ENCODE measurements at regions of chr17 and their contacts with region 1.

Region 1: GRCh38 chr17:48577946-48578615 is at the start of gene HOXB4:
- DNase-seq: peak; percentile 95
- H3K4me3 ChIP-seq: peak within 1 kb of the TSS; percentile 66 to 84 (median 70)
- H3K27ac ChIP-seq: peak within 1 kb of the TSS; percentile 94 to 99 (median 96)
- H3K4me1 ChIP-seq: peaks cover 0 to 74% (median 53%) of the 10 kb centered on the region in 4 donors
- H3K27me3 ChIP-seq: no peaks in the 10 kb centered on the region
- CTCF ChIP-seq: no peak
- EP300 ChIP-seq: no peak
- POLR2A ChIP-seq: peak; percentile 17 to 37
- total RNA-seq, gene HOXB4: 4.6 to 8.3 (median 5.4) TPM

Region 2: DNA sequence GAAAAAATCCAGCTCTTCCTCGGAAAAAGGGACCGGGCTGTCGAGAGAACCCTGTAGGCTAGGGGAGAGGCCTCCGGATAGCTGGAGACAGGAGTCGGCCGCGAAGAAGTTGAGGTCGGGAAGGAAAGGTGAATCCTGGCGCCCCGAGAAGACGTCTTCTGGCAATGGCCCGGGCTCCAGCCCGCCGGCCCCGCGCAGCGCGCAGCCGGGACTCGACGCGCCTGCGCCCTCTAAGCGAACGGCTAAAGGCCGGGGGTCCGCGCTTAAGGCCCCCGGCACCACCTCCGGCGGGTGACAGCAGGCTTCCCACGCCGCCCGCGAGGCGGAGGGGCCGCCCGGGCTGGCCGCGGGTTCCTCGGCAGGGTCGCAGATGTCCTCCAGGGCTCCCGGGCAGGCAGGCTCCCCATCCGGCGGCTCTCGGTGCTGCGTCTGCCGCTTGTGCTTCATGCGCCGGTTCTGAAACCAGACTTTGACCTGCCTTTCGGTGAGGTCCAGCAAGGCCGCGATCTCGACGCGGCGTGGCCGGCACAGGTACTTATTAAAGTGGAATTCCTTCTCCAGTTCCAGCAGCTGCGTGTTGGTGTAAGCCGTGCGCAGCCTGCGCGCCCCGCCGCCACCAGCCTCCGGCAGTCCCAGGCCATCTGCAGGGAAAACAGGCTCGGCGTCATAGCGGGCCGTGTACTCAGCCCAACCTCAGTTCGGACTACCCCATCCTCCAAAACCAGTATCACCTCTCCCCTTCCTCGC is 34.8 kb before region 1 on chr17:
- intact Hi-C with region 1: loop called (anchors 2 kb)
- DNase-seq: peak; percentile 83
- H3K4me3 ChIP-seq: peak overlapping the region; percentile 72 to 87 (median 84)
- H3K27ac ChIP-seq: peak overlapping the region; percentile 94 to 99 (median 96)
- H3K4me1 ChIP-seq: peaks cover 0 to 52% (median 49%) of the 10 kb centered on the region in 4 donors
- H3K27me3 ChIP-seq: no peaks in the 10 kb centered on the region
- CTCF ChIP-seq: peak in 2 of 4 experiments; percentile 15 to 41
- EP300 ChIP-seq: no peak
- POLR2A ChIP-seq: no peak

Region 3: DNA sequence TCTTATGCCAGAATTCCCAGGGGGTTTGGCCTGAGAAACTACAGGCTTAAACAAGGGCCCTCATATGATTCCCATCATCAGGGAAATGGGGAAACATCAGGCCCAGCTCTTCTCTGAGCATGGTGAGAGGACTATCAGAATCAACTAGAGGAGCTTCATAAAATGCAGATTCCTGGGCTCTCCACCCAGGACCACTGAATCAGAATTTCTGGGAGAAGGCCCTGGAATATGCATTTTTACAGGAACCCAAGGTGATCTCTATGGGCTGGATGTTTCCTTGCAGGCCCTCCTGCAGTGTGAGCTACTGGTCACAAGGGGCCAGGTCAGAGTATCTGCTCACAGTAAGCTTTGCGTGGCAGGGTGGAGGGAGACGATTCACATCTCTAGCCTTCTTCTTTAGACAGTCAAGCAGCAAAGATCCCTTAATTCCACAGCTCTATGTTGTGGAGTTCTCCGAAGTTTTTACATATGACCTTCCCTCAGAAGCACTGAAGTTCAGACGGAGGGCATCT is 189.2 kb after region 1 on chr17:
- intact Hi-C with region 1: no loop called
- DNase-seq: peak; percentile 18
- H3K4me3 ChIP-seq: no peak overlapping the region
- H3K27ac ChIP-seq: no peak overlapping the region
- H3K4me1 ChIP-seq: no peaks in the 10 kb centered on the region
- H3K27me3 ChIP-seq: peaks cover 0 to 28% (median 4%) of the 10 kb centered on the region in 3 donors
- CTCF ChIP-seq: no peak
- EP300 ChIP-seq: no peak
- POLR2A ChIP-seq: no peak

Measured in sigmoid colon (tissue), 7 donors.